ENCODE measurements at regions of chr1 and their contacts with region 1.

Region 1: GRCh38 chr1:158203693-158204457 is 23.2 kb downstream of the CD1D start:
- DNase-seq: no peak
- ATAC-seq: peak; percentile 47 to 58
- H3K4me3 ChIP-seq: no peak overlapping the region
- H3K27ac ChIP-seq: no peak overlapping the region
- H3K4me1 ChIP-seq: no peaks in the 10 kb centered on the region
- H3K27me3 ChIP-seq: no peaks in the 10 kb centered on the region
- CTCF ChIP-seq: peak in 4 of 5 experiments; percentile 48 to 78 (median 61)
- POLR2A ChIP-seq: no peak

Region 2: GRCh38 chr1:158087320-158087927 is 116.5 kb before region 1 on chr1:
- in situ Hi-C with region 1: no loop called
- intact Hi-C with region 1: no loop called
- DNase-seq: no peak
- ATAC-seq: no peak
- H3K4me3 ChIP-seq: no peak overlapping the region
- H3K27ac ChIP-seq: no peak overlapping the region
- H3K4me1 ChIP-seq: no peaks in the 10 kb centered on the region
- H3K27me3 ChIP-seq: no peaks in the 10 kb centered on the region
- CTCF ChIP-seq: peak; percentile 43 to 66 (median 52)
- POLR2A ChIP-seq: no peak

Region 3: GRCh38 chr1:159071970-159072582 is 868.2 kb after region 1 on chr1:
- in situ Hi-C with region 1: loop called in 2 of 4 experiments (anchors 10 to 25 kb)
- intact Hi-C with region 1: loop called (anchors 10 kb)
- DNase-seq: no peak
- ATAC-seq: peak in 1 of 2 donors; percentile 41
- H3K4me3 ChIP-seq: no peak overlapping the region
- H3K27ac ChIP-seq: no peak overlapping the region
- H3K4me1 ChIP-seq: no peaks in the 10 kb centered on the region
- H3K27me3 ChIP-seq: no peaks in the 10 kb centered on the region
- CTCF ChIP-seq: peak; percentile 19 to 59 (median 48)
- POLR2A ChIP-seq: no peak